ENCODE measurements at regions of chr15 and their contacts with region 1.

Region 1: DNA sequence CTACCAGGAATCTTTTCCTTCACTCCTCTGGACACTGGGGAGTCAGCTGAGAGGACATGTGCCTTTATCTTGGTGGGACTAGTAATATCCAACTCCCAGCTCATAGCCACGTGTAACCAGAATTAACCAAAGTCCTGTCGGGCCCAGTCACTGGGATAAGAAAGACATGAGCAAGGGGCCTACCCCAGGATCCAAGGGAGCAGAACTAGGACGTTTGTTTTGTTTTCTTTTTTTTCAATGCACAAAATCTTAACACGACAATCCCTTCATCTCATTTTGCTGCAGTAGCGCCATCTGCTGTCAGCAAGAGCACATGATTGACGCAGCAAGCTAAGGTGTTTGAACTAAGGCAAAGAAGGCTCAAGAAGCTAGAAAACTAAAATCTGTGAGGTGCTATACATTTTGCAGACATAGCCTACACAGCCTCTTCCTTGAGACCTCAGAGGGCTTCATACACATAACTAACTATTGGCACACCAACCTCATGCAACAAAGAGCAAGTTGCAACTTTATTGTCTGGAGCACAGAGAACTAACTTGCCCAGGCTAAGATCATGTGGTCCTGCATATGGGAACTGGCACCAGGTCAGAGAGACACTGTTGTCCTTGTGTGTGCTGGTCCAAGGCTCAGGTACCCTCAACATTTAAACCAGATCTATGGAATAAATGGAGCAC is 43.6 kb downstream of the RLBP1 start:
- DNase-seq: peak; percentile 83
- ATAC-seq: peak; percentile 49
- H3K4me3 Mint-ChIP-seq: no peak overlapping the region
- H3K27ac Mint-ChIP-seq: no peak overlapping the region
- H3K4me1 Mint-ChIP-seq: peaks cover 6% of the 10 kb centered on the region
- H3K27me3 Mint-ChIP-seq: no peaks in the 10 kb centered on the region

Region 2: GRCh38 chr15:89034288-89034687 is 143.5 kb before region 1 on chr15:
- CTCF ChIA-PET with region 1: interaction called, 10 read pairs
- POLR2A ChIA-PET with region 1: no interaction called
- DNase-seq: peak; percentile 16
- ATAC-seq: no peak
- H3K4me3 Mint-ChIP-seq: no peak overlapping the region
- H3K27ac Mint-ChIP-seq: no peak overlapping the region
- H3K4me1 Mint-ChIP-seq: no peaks in the 10 kb centered on the region
- H3K27me3 Mint-ChIP-seq: peaks cover 27% of the 10 kb centered on the region

Region 3: GRCh38 chr15:89052474-89052873 is 125.3 kb before region 1 on chr15:
- CTCF ChIA-PET with region 1: interaction called, 88 read pairs
- POLR2A ChIA-PET with region 1: no interaction called
- DNase-seq: no peak
- ATAC-seq: no peak
- H3K4me3 Mint-ChIP-seq: no peak overlapping the region
- H3K27ac Mint-ChIP-seq: no peak overlapping the region
- H3K4me1 Mint-ChIP-seq: peaks cover 16% of the 10 kb centered on the region
- H3K27me3 Mint-ChIP-seq: no peaks in the 10 kb centered on the region

Region 4: GRCh38 chr15:89087830-89088604 is 89.8 kb before region 1 on chr15 and contains the start of gene ABHD2:
- CTCF ChIA-PET with region 1: interaction called, 26 read pairs
- POLR2A ChIA-PET with region 1: interaction called, 4 read pairs
- DNase-seq: peak; percentile 99
- ATAC-seq: peak; percentile 99
- H3K4me3 Mint-ChIP-seq: no peak within 1 kb of the TSS
- H3K27ac Mint-ChIP-seq: no peak within 1 kb of the TSS
- H3K4me1 Mint-ChIP-seq: peaks cover 31% of the 10 kb centered on the region
- H3K27me3 Mint-ChIP-seq: no peaks in the 10 kb centered on the region
- total RNA-seq, gene ABHD2: 71.3 to 71.9 TPM

Region 5: DNA sequence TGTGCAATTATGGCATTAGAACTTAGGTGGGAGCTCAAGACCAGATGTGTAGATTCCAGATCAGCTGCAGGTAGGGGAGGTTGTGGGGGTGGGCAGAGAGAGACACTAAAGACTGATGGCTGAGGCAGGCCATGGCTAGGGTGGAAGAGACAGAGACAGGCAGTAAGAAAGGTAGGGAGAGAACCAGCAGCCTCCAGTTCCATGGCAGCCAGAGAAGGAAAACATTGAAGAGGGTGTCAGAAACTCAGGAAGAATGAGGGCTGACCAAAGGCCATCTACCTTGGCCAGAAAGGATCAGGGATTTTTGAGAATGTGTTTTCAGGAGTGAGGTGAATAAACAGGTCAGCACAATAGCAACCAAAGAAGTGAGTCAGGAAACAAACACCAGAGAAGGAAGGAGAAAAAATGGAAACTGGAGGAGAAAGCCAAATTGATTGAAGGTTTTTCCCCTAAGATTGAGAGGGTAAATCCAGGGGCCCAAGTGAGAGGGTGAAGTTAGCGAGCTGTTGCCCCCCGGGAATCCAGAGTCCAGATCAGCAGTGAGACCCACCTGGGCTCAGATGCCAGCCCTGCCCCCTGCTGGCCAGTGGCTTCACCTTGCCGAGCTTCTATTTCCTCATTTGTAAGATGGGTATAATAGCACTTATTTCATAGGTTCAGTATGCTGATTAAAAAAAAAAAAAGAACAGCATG is 48.5 kb before region 1 on chr15:
- CTCF ChIA-PET with region 1: interaction called, 14 read pairs
- POLR2A ChIA-PET with region 1: no interaction called
- DNase-seq: peak; percentile 64
- ATAC-seq: no peak
- H3K4me3 Mint-ChIP-seq: no peak overlapping the region
- H3K27ac Mint-ChIP-seq: no peak overlapping the region
- H3K4me1 Mint-ChIP-seq: peaks cover 15% of the 10 kb centered on the region
- H3K27me3 Mint-ChIP-seq: no peaks in the 10 kb centered on the region

Region 6: DNA sequence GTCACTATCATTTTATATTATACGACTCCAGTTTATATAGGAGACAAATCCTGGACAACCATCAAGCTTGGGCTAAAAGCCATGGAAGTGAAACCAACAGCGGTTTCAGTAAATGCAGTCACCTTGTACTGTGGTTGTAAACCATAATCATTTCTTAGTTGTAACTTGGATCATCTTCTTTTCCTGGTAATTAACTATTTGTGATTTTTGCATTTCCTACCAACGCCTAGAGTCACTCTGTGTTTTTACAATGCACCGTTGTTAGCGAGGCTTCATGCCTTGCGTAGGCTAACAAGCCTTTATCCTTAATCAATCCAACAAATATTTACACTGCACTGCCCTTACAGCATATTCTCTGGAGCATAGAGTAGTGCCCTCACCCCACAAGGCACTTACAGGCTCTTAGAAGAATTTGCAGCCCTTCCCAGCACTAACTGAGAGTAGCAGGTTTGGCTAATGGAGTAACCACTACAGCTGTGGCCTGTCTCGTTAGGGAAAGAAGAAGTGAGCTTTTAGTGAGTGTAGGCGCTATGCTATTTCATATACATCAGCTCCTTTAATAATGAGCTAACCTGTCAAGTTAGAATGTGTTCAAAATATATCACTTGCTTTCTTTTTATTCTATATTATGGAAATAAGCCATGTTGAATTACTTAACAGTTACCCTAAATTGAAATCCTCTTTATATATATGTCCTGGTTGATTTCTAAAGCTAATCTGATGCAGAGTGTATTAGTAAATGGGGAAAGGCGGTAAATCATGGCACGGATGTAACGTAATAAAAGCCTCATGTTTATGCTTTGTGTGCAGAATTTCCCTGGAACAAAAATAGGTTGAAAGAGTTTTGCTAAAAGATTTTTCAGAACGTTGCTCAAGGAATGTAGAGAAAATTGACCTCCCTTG is 26.8 kb before region 1 on chr15:
- CTCF ChIA-PET with region 1: interaction called, 10 read pairs
- POLR2A ChIA-PET with region 1: no interaction called
- DNase-seq: no peak
- ATAC-seq: no peak
- H3K4me3 Mint-ChIP-seq: no peak overlapping the region
- H3K27ac Mint-ChIP-seq: no peak overlapping the region
- H3K4me1 Mint-ChIP-seq: peaks cover 9% of the 10 kb centered on the region
- H3K27me3 Mint-ChIP-seq: no peaks in the 10 kb centered on the region

Region 7: DNA sequence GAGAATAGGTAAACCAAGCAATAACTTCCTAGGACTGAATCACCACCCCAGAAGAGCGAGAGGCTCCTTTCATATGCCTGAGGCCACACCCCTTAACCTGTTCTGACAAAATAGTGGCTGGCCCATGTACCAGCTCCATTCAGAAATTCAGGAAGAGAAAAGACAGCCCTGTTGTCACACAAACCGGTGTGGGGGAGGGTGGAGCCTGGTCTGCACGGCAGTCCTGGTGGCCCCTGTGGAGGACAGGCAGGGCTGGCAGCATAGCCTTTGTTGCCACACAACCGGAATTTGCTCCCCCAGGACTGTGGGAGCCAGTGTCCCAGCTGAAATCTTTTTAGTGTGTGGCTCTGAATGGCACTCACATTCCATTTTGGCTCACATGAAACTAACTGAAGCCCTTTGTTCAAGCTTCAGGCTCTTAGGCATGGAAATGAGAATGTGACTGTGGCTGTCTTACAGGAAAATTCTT is 19.8 kb after region 1 on chr15:
- CTCF ChIA-PET with region 1: interaction called, 10 read pairs
- POLR2A ChIA-PET with region 1: no interaction called
- DNase-seq: no peak
- ATAC-seq: no peak
- H3K4me3 Mint-ChIP-seq: no peak overlapping the region
- H3K27ac Mint-ChIP-seq: no peak overlapping the region
- H3K4me1 Mint-ChIP-seq: peaks cover 12% of the 10 kb centered on the region
- H3K27me3 Mint-ChIP-seq: no peaks in the 10 kb centered on the region

Region 8: DNA sequence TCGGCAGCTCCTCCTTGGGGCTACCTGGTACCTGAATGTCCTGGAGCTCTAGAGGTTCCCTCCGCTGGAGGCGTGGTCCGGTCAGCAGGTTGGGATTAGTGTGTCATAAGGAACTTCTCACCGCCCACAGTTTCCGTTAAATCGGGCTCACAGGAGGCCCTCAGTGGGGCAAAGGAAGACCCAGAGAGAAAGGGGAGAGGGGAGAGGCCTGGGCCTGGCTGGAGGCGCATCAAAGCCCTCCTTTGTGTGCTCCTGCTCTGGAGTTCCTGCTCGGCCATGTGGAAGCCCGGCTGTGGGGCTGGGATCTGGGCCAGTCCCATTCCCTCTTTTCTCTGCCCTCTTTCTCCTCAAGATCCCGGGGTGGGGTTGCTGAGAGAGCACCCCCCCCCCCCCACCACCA is 43.8 kb after region 1 on chr15 and contains the start of gene RLBP1:
- CTCF ChIA-PET with region 1: no interaction called
- POLR2A ChIA-PET with region 1: no interaction called
- DNase-seq: no peak
- ATAC-seq: no peak
- H3K4me3 Mint-ChIP-seq: no peak within 1 kb of the TSS
- H3K27ac Mint-ChIP-seq: no peak within 1 kb of the TSS
- H3K4me1 Mint-ChIP-seq: no peaks in the 10 kb centered on the region
- H3K27me3 Mint-ChIP-seq: peaks cover 6% of the 10 kb centered on the region
- total RNA-seq, gene RLBP1: not detected

Region 9: DNA sequence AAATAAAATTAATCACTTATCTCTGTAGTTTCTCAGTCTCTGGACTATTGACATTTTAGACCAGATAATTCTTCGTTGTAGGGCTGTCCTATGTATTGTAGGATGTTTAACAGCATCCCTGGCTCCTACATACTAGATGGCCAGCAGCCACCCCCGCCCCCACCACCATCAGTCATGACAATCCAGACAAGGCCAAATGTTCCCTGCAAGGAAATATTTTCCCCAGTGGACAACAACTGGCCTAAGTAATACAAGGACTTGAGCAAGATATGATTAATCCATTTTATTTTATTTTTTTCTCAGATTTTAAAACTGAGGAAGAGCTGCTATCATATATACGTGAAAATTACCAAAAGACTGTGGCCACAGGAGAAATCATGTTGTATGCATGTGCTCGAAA is 421.3 kb after region 1 on chr15:
- CTCF ChIA-PET with region 1: no interaction called
- POLR2A ChIA-PET with region 1: no interaction called
- DNase-seq: no peak
- ATAC-seq: no peak
- H3K4me3 Mint-ChIP-seq: no peak overlapping the region
- H3K27ac Mint-ChIP-seq: no peak overlapping the region
- H3K4me1 Mint-ChIP-seq: no peaks in the 10 kb centered on the region
- H3K27me3 Mint-ChIP-seq: no peaks in the 10 kb centered on the region

Measured in activated CD8-positive, alpha-beta T cell treated with anti-CD3 and anti-CD28 coated beads, Interleukin-2, amount 10 ng/mL, durations not matched to agents 7 days and 5 days (primary cell).